IMR-90 (cell line): ENCODE measurements at regions of chrX and their contacts with region 1.

Region 1: DNA sequence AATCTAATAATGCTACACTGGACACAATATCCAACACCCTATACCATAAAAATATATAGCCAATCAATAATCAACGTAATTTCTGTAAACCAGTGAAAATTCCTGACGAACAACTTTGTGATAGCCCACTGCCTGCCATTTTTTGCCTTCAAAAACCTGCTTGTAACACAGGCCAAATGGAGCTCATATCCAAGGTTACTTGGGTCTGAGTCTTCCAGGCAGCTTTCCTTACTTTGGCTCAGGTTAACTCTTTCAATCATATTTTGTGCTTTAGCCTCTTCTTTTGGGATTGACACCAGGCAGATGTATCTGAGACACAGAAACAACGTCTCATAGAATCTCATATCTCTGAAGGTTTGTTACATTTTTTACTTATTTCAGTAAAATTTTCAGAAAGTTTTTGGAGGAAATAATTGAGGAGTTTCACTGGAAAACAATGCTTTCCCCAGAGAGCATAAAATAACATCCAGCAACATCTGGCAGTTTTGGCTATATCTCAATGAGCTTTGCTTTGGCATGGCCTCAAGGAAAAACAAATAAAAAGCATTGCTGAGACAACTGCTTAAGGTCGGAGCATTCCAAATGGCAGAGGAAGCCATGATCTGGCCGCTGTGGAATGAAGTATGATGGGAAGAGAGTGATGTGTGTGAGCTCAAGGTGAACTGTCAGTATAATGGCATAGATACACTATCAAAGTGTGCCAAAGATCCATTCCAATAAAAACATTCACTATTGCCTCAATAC is 162.9 kb upstream of the SPIN4 start:
- DNase-seq: peak; percentile 80
- ATAC-seq: peak; percentile 95
- H3K4me3 ChIP-seq: no peak overlapping the region
- H3K27ac ChIP-seq: peak overlapping the region; percentile 88; the same call in 1 of the 2 replicates
- H3K4me1 ChIP-seq: no peaks in the 10 kb centered on the region
- H3K27me3 ChIP-seq: no peaks in the 10 kb centered on the region
- CTCF ChIP-seq: no peak
- POLR2A ChIP-seq: no peak
- RAD21 ChIP-seq: no peak

Region 2: DNA sequence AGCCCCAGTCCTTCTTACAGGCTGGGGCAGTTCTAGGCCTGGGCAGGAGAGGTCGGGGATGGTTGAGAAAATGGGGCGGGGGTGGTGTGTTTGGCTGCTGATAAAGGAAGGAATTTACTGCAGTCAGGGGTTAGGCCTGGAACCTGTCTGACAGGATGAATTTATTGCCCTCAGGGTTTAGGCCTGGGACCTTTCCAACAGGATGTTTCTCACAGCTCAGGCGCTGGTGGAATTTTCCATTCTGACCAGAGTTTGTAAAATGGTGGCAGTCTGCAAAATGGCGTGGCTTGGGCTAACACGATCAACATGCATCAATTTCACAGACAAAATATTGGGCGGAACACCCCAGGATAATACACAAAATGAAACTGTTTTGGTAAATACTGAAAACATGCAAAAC is 79.3 kb before region 1 on chrX:
- CTCF ChIA-PET with region 1: no interaction called
- POLR2A ChIA-PET with region 1: no interaction called
- dilution Hi-C with region 1: no loop called
- in situ Hi-C with region 1: no loop called
- intact Hi-C with region 1: loop called (anchors 10 kb)
- DNase-seq: peak; percentile 22
- ATAC-seq: no peak
- H3K4me3 ChIP-seq: no peak overlapping the region
- H3K27ac ChIP-seq: no peak overlapping the region
- H3K4me1 ChIP-seq: no peaks in the 10 kb centered on the region
- H3K27me3 ChIP-seq: no peaks in the 10 kb centered on the region
- CTCF ChIP-seq: no peak
- POLR2A ChIP-seq: no peak
- RAD21 ChIP-seq: no peak

Region 3: DNA sequence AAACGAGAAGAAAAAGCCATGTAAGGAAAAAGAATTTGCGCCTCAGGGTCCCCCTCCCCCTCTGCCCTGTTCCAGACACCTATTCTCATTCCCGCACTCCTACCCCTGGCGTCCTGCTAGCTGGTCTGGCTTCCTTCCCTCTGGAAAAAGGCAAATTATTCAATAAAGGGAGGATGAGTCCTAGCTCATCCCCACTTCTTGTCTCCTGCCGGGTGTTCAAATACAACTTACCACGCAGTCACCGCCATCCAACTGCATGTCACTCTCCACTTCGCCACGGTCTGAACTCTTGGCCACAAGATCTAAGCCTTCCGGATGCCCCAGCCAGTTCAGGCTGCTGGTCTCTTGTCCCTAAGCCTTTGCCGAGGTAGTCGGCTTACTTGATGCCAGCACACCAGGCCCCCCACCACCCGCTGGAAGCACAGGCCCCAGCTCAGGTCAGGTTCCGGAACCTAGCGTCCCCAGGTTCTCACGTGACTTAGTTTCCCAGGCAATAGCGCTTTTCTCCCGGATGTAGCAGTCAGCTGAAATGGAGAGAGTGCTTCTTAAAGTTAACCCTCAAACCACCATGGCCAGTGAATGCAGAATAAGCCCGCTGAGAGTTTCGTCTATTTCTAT is 46.7 kb after region 1 on chrX:
- CTCF ChIA-PET with region 1: no interaction called
- POLR2A ChIA-PET with region 1: no interaction called
- dilution Hi-C with region 1: no loop called
- in situ Hi-C with region 1: no loop called
- intact Hi-C with region 1: loop called (anchors 5 kb)
- DNase-seq: peak; percentile 74
- ATAC-seq: peak; percentile 89
- H3K4me3 ChIP-seq: peak overlapping the region; percentile 80
- H3K27ac ChIP-seq: peak overlapping the region; percentile 97
- H3K4me1 ChIP-seq: no peaks in the 10 kb centered on the region
- H3K27me3 ChIP-seq: no peaks in the 10 kb centered on the region
- CTCF ChIP-seq: no peak
- POLR2A ChIP-seq: no peak
- RAD21 ChIP-seq: no peak